ENCODE measurements at regions of chr16 and their contacts with region 1.

Region 1: DNA sequence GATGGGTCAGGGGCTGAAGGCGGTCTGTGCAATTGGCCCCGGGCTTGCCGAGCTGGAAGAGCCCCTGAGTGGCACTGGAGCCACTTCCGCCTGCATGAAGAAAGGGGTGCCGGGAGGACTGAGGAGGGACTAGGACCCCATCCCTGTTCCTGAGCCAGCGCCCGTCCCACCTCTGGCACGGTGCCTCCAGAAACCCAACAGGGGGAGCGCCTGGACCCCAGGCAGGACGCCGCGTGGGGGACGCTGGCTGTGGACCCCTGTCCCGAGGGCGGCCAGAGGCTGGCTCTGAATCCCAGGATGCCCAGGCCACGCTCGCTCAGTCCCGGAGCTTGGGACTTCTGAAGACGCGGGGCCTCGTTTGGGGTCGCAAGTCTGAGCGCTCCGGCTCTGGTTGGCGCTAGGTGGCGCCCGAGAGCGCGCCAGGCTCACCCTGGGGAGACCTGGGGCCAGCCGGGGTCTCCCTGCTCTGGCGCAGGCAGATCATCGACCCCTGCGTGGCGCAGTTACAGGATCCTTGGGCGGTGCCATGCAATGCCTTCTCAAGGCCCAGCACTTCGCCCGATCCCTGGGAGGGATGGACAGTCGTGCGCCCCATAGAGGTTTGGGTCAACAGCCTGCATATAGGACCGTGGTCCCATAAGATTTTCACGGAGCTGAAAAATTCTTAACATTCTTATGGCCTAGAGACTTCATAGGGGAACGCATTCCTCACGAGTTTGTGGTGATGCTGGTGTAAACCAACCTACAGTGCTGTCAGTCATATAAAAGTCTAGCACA is 58.5 kb upstream of the CREBBP start:
- DNase-seq: peak; percentile 56
- ATAC-seq: peak; percentile 95
- H3K4me3 Mint-ChIP-seq: no peak overlapping the region
- H3K27ac Mint-ChIP-seq: no peak overlapping the region
- H3K4me1 Mint-ChIP-seq: peaks cover 3% of the 10 kb centered on the region
- H3K27me3 Mint-ChIP-seq: peaks cover 4% of the 10 kb centered on the region
- CTCF ChIP-seq: peak; percentile 98

Region 2: GRCh38 chr16:3949287-3949686 is 10.3 kb after region 1 on chr16:
- CTCF ChIA-PET with region 1: interaction called, 10 read pairs
- POLR2A ChIA-PET with region 1: no interaction called
- intact Hi-C with region 1: no loop called
- DNase-seq: no peak
- ATAC-seq: no peak
- H3K4me3 Mint-ChIP-seq: no peak overlapping the region
- H3K27ac Mint-ChIP-seq: no peak overlapping the region
- H3K4me1 Mint-ChIP-seq: no peaks in the 10 kb centered on the region
- H3K27me3 Mint-ChIP-seq: peaks cover 9% of the 10 kb centered on the region
- CTCF ChIP-seq: no peak

Measured in activated CD8-positive, alpha-beta T cell treated with anti-CD3 and anti-CD28 coated beads for 36 hours (primary cell).